ENCODE measurements at regions of chr5 and their contacts with region 1.

Region 1: GRCh38 chr5:4879693-4880303 is 260.3 kb upstream of the ADAMTS16 start:
- DNase-seq: peak; percentile 77 to 87
- H3K4me3 ChIP-seq: no peak overlapping the region
- H3K4me3 Mint-ChIP-seq: no peak overlapping the region
- H3K27ac Mint-ChIP-seq: peak overlapping the region; percentile 38
- H3K4me1 ChIP-seq: no peaks in the 10 kb centered on the region
- H3K4me1 Mint-ChIP-seq: no peaks in the 10 kb centered on the region
- H3K27me3 ChIP-seq: no peaks in the 10 kb centered on the region
- H3K27me3 Mint-ChIP-seq: no peaks in the 10 kb centered on the region
- CTCF ChIP-seq: peak; percentile 94 to 96

Region 2: GRCh38 chr5:4815002-4815401 is 64.8 kb before region 1 on chr5:
- CTCF ChIA-PET with region 1: no interaction called
- POLR2A ChIA-PET with region 1: no interaction called
- intact Hi-C with region 1: no loop called
- DNase-seq: no peak
- H3K4me3 ChIP-seq: no peak overlapping the region
- H3K4me3 Mint-ChIP-seq: no peak overlapping the region
- H3K27ac Mint-ChIP-seq: no peak overlapping the region
- H3K4me1 ChIP-seq: no peaks in the 10 kb centered on the region
- H3K4me1 Mint-ChIP-seq: no peaks in the 10 kb centered on the region
- H3K27me3 ChIP-seq: no peaks in the 10 kb centered on the region
- H3K27me3 Mint-ChIP-seq: peaks cover 4% of the 10 kb centered on the region
- CTCF ChIP-seq: no peak

Region 3: GRCh38 chr5:5063533-5063953 is 183.7 kb after region 1 on chr5:
- CTCF ChIA-PET with region 1: interaction called, 17 read pairs
- POLR2A ChIA-PET with region 1: no interaction called
- intact Hi-C with region 1: loop called (anchors 1 kb)
- DNase-seq: peak; percentile 86 to 88
- H3K4me3 ChIP-seq: no peak overlapping the region
- H3K4me3 Mint-ChIP-seq: peak overlapping the region; percentile 32
- H3K27ac Mint-ChIP-seq: peak overlapping the region; percentile 93
- H3K4me1 ChIP-seq: peaks cover 52% of the 10 kb centered on the region
- H3K4me1 Mint-ChIP-seq: peaks cover 38% of the 10 kb centered on the region
- H3K27me3 ChIP-seq: no peaks in the 10 kb centered on the region
- H3K27me3 Mint-ChIP-seq: no peaks in the 10 kb centered on the region
- CTCF ChIP-seq: peak; percentile 48 to 49

Region 4: DNA sequence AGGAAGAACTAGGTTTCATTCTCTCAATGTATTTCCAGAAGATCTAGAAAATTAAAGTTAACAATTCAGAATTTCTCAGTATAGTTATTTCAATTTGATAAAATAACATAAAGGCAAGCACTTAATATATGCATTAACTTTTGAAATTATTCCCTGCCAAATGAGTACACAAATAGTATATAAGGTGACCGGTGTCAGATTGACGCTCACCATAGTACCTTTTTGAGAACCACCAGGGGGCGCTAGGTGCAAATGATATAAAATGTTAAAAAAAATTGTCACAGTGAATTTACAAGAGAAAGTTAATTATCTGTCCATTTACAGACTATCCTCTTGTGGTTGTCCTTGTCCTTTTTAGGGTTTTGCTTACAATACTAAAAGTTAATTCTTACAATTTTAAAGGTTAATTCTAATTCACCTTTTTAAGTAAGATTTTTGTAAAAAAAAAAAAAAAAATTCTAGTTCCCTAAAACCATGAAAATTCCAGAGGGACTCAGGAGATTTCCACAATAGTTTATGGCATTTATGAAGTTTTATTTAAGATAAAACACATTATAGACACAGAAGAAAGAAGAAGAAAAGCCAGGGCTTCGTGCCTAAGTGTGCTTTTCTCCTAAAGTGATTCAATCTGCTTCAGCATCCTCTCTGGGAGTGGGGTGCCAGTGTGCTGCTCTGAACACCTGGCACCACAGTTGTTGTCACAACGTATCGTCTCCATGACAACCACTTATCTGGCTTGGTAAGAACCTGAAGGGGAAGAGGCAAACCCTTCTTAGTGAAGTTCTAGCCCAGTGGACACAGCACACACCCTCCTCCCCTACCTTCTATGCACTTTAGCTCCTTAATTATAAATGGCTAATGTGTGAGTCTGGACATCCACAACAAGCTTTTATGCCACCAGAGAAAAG is 262.1 kb after region 1 on chr5:
- CTCF ChIA-PET with region 1: no interaction called
- POLR2A ChIA-PET with region 1: no interaction called
- intact Hi-C with region 1: loop called (anchors 1 kb)
- DNase-seq: peak in 1 of 2 experiments; percentile 62
- H3K4me3 ChIP-seq: no peak overlapping the region
- H3K4me3 Mint-ChIP-seq: no peak overlapping the region
- H3K27ac Mint-ChIP-seq: no peak overlapping the region
- H3K4me1 ChIP-seq: peaks cover 3% of the 10 kb centered on the region; the same call in 1 of the 2 replicates
- H3K4me1 Mint-ChIP-seq: peaks cover 2% of the 10 kb centered on the region
- H3K27me3 ChIP-seq: no peaks in the 10 kb centered on the region
- H3K27me3 Mint-ChIP-seq: no peaks in the 10 kb centered on the region
- CTCF ChIP-seq: peak; percentile 66 to 69